MCF 10A (cell line): ENCODE measurements at regions of chr18 and their contacts with region 1.

Region 1: DNA sequence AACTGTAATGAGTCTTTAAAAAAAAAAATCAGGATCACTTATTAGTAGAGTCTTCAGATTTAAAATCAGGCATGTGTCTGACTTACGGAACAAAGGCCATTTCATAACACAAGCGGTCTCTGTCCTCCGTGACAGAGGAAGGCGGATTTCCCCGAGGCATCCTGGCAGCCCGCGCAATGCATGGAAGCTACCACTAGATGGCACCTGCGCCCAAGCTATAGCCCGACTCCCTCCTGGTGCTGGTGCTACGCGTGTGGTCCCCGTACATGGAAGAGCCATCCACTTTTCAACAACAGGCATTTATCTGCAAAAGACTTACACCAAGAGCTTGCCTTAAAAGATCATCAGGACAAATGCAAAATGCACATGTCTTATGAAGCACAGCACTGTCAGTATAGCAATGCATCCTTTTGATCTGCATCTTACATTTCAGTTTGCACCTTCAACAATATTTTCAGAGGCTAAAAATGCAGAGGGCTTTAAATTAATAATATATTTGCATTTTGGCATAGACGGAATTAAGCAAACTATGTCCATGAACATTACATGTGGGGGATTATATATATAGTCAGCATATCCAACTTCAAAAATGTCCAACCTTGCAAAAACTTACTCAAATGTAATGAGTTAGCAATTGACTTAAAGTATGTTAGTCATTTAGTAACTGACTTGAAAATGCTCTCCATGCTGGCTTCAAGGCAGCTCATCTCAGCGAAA is 96.0 kb downstream of the ZNF516 start:
- DNase-seq: peak; percentile 76
- H3K4me3 Mint-ChIP-seq: no peak overlapping the region
- H3K27ac Mint-ChIP-seq: no peak overlapping the region
- H3K4me1 Mint-ChIP-seq: peaks cover 12% of the 10 kb centered on the region
- H3K27me3 Mint-ChIP-seq: no peaks in the 10 kb centered on the region
- CTCF ChIP-seq: peak; percentile 91

Region 2: GRCh38 chr18:76153691-76154090 is 245.4 kb before region 1 on chr18:
- CTCF ChIA-PET with region 1: no interaction called
- POLR2A ChIA-PET with region 1: no interaction called
- intact Hi-C with region 1: no loop called
- DNase-seq: no peak
- H3K4me3 Mint-ChIP-seq: no peak overlapping the region
- H3K27ac Mint-ChIP-seq: no peak overlapping the region
- H3K4me1 Mint-ChIP-seq: no peaks in the 10 kb centered on the region
- H3K27me3 Mint-ChIP-seq: no peaks in the 10 kb centered on the region
- CTCF ChIP-seq: no peak

Region 3: DNA sequence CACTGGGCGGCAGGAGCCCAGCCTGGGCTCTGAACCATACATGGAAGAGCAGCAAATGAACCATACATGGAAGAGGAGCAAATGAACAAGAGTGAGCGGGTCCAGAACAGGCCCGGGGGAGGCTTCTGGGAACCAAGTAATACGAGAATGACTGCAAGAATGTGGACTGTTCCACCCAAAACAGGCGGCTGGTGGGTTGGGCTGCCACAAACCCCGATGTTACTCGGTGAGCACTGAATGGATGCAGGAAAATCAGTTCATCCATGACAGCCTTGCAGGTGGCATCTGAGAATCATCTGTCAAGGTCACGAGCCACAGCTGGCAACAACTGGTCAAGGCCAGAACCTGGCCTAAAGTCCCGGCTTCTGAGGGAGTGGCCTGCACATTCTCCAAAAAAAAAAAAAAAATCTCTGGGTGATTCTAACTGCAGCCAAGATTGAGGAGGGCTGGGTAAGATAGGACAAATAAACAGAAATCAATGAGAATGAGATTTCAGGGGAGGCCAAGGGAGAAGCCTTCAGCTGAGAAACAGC is 10.1 kb before region 1 on chr18:
- CTCF ChIA-PET with region 1: interaction called, 25 read pairs
- POLR2A ChIA-PET with region 1: interaction called, 3 read pairs
- intact Hi-C with region 1: no loop called
- DNase-seq: no peak
- H3K4me3 Mint-ChIP-seq: no peak overlapping the region
- H3K27ac Mint-ChIP-seq: no peak overlapping the region
- H3K4me1 Mint-ChIP-seq: peaks cover 17% of the 10 kb centered on the region
- H3K27me3 Mint-ChIP-seq: no peaks in the 10 kb centered on the region
- CTCF ChIP-seq: no peak

Region 4: DNA sequence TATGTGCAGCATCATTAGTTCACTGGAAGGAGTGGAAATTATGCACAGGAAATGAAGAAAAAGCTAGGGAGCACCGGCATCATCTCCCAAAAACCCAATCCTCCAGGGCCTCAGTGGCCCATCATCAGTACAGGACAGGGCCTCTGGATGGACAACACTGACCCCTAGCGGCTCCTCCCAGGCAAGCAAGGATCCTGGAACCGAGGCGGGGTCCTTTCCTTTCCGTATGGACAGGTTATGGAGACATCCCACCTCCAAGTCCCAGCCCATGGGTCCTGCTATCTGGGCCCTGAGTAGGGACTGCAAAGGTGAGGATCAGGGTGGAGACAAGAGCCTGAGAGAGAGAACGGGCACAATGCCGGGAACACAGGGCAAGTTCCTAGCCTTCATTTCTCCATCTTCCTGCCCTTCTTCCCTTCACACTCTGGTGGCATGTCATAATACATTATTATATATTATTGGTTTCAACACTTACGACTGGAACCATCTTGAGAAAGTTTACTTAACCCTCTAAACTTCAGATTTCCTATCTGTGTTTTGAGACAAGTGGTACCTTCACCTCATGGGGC is 27.8 kb after region 1 on chr18:
- CTCF ChIA-PET with region 1: interaction called, 11 read pairs
- POLR2A ChIA-PET with region 1: no interaction called
- intact Hi-C with region 1: no loop called
- DNase-seq: peak; percentile 51
- H3K4me3 Mint-ChIP-seq: no peak overlapping the region
- H3K27ac Mint-ChIP-seq: no peak overlapping the region
- H3K4me1 Mint-ChIP-seq: peaks cover 17% of the 10 kb centered on the region
- H3K27me3 Mint-ChIP-seq: no peaks in the 10 kb centered on the region
- CTCF ChIP-seq: peak; percentile 54

Region 5: GRCh38 chr18:76565238-76566180 is 166.5 kb after region 1 on chr18:
- CTCF ChIA-PET with region 1: no interaction called
- POLR2A ChIA-PET with region 1: no interaction called
- intact Hi-C with region 1: loop called (anchors 2 kb)
- DNase-seq: peak; percentile 95
- H3K4me3 Mint-ChIP-seq: peak overlapping the region; percentile 64
- H3K27ac Mint-ChIP-seq: peak overlapping the region; percentile 98
- H3K4me1 Mint-ChIP-seq: peaks cover 34% of the 10 kb centered on the region
- H3K27me3 Mint-ChIP-seq: no peaks in the 10 kb centered on the region
- CTCF ChIP-seq: no peak

Region 6: DNA sequence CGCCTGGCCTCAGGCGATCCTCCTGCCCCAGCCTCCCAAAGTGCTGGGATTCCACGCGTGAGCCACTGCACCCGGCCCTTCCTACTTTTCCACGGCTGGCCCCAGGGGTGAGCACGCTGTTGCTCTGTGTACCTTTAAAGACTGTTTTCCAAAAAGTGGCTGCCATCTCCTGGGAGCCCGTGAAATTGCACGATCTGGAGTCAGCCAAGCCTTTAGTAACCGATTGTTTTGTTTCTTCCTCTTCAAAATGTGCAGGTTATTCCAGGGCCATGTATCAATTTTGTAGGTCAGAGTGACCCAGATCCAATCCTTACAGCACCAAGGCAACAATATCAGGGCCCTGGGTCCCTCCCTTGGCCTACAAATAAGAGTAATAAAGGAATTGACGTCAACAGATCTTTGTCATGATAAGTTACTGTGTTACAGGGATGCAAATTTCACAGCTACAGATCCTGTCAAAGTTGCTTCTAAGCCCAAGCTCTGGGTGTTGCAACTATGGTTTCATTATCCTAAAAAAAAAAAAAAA is 287.7 kb after region 1 on chr18:
- CTCF ChIA-PET with region 1: interaction called, 150 read pairs
- POLR2A ChIA-PET with region 1: interaction called, 7 read pairs
- intact Hi-C with region 1: loop called (anchors 1 kb)
- DNase-seq: peak; percentile 75
- H3K4me3 Mint-ChIP-seq: no peak overlapping the region
- H3K27ac Mint-ChIP-seq: peak overlapping the region; percentile 47
- H3K4me1 Mint-ChIP-seq: peaks cover 7% of the 10 kb centered on the region
- H3K27me3 Mint-ChIP-seq: no peaks in the 10 kb centered on the region
- CTCF ChIP-seq: peak; percentile 73

Region 7: GRCh38 chr18:76709659-76710645 is 310.9 kb after region 1 on chr18:
- CTCF ChIA-PET with region 1: interaction called, 63 read pairs
- POLR2A ChIA-PET with region 1: interaction called, 8 read pairs
- intact Hi-C with region 1: loop called (anchors 1 kb)
- DNase-seq: peak; percentile 70
- H3K4me3 Mint-ChIP-seq: no peak overlapping the region
- H3K27ac Mint-ChIP-seq: no peak overlapping the region
- H3K4me1 Mint-ChIP-seq: no peaks in the 10 kb centered on the region
- H3K27me3 Mint-ChIP-seq: no peaks in the 10 kb centered on the region
- CTCF ChIP-seq: peak; percentile 91

Region 8: GRCh38 chr18:77039196-77040130 is 640.4 kb after region 1 on chr18:
- CTCF ChIA-PET with region 1: no interaction called
- POLR2A ChIA-PET with region 1: no interaction called
- intact Hi-C with region 1: no loop called
- DNase-seq: peak; percentile 17
- H3K4me3 Mint-ChIP-seq: no peak overlapping the region
- H3K27ac Mint-ChIP-seq: peak overlapping the region; percentile 33
- H3K4me1 Mint-ChIP-seq: peaks cover 7% of the 10 kb centered on the region
- H3K27me3 Mint-ChIP-seq: no peaks in the 10 kb centered on the region
- CTCF ChIP-seq: no peak